ENCODE measurements at regions of chr9 and their contacts with region 1.

Region 1: DNA sequence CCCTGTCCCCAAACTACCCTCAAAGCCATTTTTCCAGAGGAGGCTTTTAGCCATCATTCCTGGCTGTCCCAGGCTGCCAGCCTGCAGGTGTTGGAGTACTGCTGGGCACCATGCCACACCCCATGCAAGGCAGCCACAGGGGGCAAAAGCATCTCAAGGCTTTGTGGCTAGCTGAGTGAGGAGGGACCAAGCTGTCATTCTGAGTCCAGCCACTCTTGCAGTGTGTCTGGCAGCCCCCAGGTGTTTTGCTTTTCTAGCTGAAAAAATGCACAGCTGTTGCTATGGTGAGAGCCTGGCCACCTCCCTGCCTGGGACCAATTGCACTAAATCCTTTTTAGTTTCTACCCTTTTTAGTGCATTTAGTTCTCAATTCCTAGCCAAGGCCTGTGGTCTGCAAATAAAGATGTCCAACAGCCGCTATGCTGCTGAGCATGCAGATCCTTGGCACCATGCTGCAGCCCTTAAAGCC is 50.4 kb upstream of the PTGS1 start:
- DNase-seq: no peak
- H3K4me3 Mint-ChIP-seq: no peak overlapping the region
- H3K27ac Mint-ChIP-seq: no peak overlapping the region
- H3K4me1 Mint-ChIP-seq: no peaks in the 10 kb centered on the region
- H3K27me3 Mint-ChIP-seq: no peaks in the 10 kb centered on the region

Region 2: GRCh38 chr9:122302237-122303093 is 18.0 kb before region 1 on chr9:
- CTCF ChIA-PET with region 1: no interaction called
- POLR2A ChIA-PET with region 1: no interaction called
- DNase-seq: no peak
- H3K4me3 Mint-ChIP-seq: no peak overlapping the region
- H3K27ac Mint-ChIP-seq: no peak overlapping the region
- H3K4me1 Mint-ChIP-seq: no peaks in the 10 kb centered on the region
- H3K27me3 Mint-ChIP-seq: no peaks in the 10 kb centered on the region

Region 3: GRCh38 chr9:122350638-122351355 is 30.4 kb after region 1 on chr9:
- CTCF ChIA-PET with region 1: interaction called, 10 read pairs
- POLR2A ChIA-PET with region 1: no interaction called
- DNase-seq: peak; percentile 82
- H3K4me3 Mint-ChIP-seq: no peak overlapping the region
- H3K27ac Mint-ChIP-seq: no peak overlapping the region
- H3K4me1 Mint-ChIP-seq: peaks cover 13% of the 10 kb centered on the region
- H3K27me3 Mint-ChIP-seq: peaks cover 31% of the 10 kb centered on the region

Measured in activated CD4-positive, alpha-beta memory T cell treated with anti-CD3 and anti-CD28 coated beads, Interleukin-2, amount 10 ng/mL, durations not matched to agents 7 days and 5 days (primary cell).